Colonic mucosa (tissue), 4 donors: ENCODE measurements at regions of chr9 and their contacts with region 1.

Region 1: GRCh38 chr9:104863180-104863883 is 64.6 kb downstream of the ABCA1 start:
- DNase-seq: peak; percentile 47
- H3K4me3 ChIP-seq: no peak overlapping the region
- H3K27ac ChIP-seq: peak overlapping the region; percentile 28
- H3K4me1 ChIP-seq: no peaks in the 10 kb centered on the region
- H3K27me3 ChIP-seq: no peaks in the 10 kb centered on the region
- CTCF ChIP-seq: peak; percentile 73

Region 2: GRCh38 chr9:105157130-105157583 is 293.8 kb after region 1 on chr9:
- intact Hi-C with region 1: loop called (anchors 2 kb)
- DNase-seq: peak; percentile 42
- H3K4me3 ChIP-seq: no peak overlapping the region
- H3K27ac ChIP-seq: no peak overlapping the region
- H3K4me1 ChIP-seq: no peaks in the 10 kb centered on the region
- H3K27me3 ChIP-seq: no peaks in the 10 kb centered on the region
- CTCF ChIP-seq: peak; percentile 37

Region 3: DNA sequence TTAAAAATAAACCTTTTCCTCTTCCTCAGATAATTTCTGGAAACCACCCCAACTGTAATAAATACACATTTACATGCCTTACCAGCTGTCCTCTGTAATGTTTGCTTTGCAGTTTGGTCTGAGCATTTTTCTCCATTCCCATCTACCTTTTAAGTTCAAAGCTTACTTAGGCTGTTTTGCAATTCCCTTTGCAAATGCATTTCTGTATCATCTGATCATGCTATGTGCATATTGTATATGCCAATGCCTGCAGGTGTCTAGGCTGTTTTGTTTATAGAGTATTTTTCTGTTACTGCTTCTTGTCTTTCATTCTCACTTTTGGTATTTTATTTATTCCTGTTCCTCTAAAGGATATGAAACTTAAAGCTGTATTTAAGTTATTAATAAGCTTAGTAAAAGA is 467.4 kb after region 1 on chr9:
- intact Hi-C with region 1: no loop called
- DNase-seq: no peak
- H3K4me3 ChIP-seq: no peak overlapping the region
- H3K27ac ChIP-seq: peak overlapping the region; percentile 13
- H3K4me1 ChIP-seq: no peaks in the 10 kb centered on the region
- H3K27me3 ChIP-seq: no peaks in the 10 kb centered on the region
- CTCF ChIP-seq: no peak